Ovary (tissue), 10 donors: ENCODE measurements at regions of chr14 and their contacts with region 1.

Region 1: DNA sequence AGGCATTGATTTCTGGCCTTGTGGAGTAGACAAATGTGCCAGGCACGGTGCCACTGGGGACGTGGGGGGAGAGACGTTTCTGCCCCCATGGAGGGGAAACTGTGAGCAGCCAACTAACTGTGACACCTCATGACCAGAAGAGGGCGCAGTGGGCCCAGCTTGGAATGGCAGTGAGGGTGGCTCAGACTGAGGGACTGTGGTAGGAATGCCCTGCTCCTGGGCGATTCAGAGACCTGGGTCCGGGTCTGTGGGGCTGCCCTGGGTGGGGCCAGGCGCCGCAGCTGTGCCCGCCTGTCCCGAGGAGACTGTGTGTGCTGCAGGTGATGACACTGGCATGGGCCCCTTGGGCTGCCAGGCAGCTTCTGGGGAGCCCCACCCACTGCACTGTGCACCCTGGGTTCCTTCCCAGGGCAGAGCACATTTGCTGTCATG is 60.6 kb downstream of the SLC25A47 start:
- DNase-seq: peak; percentile 36 to 68 (median 67)
- H3K4me3 ChIP-seq: no peak overlapping the region
- H3K27ac ChIP-seq: no peak overlapping the region
- H3K4me1 ChIP-seq: peaks cover 2% of the 10 kb centered on the region
- H3K27me3 ChIP-seq: no peaks in the 10 kb centered on the region
- CTCF ChIP-seq: peak; percentile 54 to 61 (median 58)
- EP300 ChIP-seq: no peak
- POLR2A ChIP-seq: no peak

Region 2: DNA sequence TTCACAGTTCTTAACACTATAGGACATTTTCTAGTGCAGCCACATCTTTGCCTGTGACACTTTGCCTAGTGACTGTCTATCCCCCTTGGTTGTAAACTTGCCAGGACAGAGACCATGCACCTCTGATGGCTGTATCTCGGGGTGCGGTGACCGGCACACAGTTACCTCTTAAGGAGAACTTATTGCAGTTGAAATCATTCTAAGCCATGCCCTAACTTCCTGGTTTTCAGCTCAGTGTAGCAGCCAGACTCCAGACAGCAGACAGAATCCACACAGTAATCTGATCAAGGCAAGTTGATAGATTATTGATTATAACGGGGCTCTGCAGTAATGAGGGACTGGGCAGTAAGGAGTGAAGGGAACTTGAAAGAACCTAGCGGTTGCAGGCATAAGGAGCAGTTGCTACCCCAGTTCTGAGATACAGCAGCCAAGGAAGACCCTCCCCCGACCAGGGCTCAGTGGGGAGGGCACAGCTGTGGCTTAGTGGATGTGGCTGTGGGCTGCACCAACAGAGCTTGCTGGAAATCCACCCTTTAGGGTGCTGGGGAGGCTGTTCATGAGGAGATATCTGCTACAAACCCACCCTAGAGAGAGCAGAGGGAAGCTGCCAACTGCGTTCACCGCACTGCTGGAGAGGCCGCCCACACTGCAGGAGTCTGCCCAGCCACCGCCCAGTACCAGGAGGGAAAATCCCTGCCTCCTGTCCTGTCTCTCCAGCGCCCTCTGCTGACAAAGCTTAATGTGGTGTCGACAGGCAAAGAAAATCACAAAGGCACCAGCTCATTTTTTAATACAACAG is 261.6 kb after region 1 on chr14:
- intact Hi-C with region 1: loop called in 3 of 4 experiments (anchors 5 kb)
- DNase-seq: peak; percentile 74 to 86 (median 82)
- H3K4me3 ChIP-seq: no peak overlapping the region
- H3K27ac ChIP-seq: no peak overlapping the region
- H3K4me1 ChIP-seq: no peaks in the 10 kb centered on the region
- H3K27me3 ChIP-seq: no peaks in the 10 kb centered on the region
- CTCF ChIP-seq: peak; percentile 15 to 68 (median 65)
- EP300 ChIP-seq: no peak
- POLR2A ChIP-seq: no peak

Region 3: GRCh38 chr14:100654814-100655740 is 271.3 kb after region 1 on chr14:
- intact Hi-C with region 1: loop called in 1 of 4 experiments (anchors 5 kb)
- DNase-seq: peak in 2 of 5 donors; percentile 28 to 63
- H3K4me3 ChIP-seq: no peak overlapping the region
- H3K27ac ChIP-seq: no peak overlapping the region
- H3K4me1 ChIP-seq: no peaks in the 10 kb centered on the region
- H3K27me3 ChIP-seq: no peaks in the 10 kb centered on the region
- CTCF ChIP-seq: peak in 2 of 3 donors; percentile 21 to 38
- EP300 ChIP-seq: no peak
- POLR2A ChIP-seq: no peak

Region 4: DNA sequence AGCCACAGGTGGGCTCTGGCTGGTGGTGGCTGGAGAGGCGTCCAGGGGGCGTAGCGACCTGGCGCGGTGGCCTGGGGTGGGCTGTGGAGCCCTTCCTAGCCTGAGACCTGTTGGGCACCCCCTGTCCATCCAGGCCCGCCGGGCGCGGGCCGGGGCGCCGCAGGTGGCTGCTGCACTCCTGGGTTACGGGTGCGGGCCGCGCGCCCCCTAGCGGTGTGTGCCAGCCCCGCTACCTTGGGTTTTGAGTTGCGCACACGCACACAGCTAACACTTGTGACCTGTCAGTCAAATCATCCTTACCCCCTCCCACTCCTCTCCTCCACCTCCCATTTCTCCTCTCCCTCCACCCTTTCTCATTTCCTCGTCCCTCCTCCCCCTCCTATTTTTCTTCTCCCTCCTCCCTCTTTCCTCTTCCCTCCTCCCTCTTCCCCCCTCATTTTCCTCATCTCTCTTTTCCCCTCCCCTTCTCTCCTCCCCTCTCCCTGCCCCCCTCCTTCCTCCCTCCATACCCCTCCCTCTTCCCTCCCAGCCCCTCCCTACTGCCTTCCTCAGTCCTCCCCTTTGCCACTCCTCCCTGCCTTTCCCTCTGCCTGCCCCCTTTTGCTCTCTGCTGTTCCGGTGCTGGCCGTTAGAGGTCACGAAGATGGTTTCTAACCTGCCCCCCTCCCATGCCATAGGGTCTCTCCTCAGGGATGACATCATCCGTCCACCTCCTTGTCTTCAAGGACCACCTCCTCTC is 444.5 kb after region 1 on chr14:
- intact Hi-C with region 1: loop called in 1 of 4 experiments (anchors 10 kb)
- DNase-seq: peak; percentile 48 to 80 (median 59)
- H3K4me3 ChIP-seq: peak overlapping the region; percentile 49
- H3K27ac ChIP-seq: peak overlapping the region in 1 of 2 donors; percentile 72
- H3K4me1 ChIP-seq: peaks cover 2% of the 10 kb centered on the region
- H3K27me3 ChIP-seq: no peaks in the 10 kb centered on the region
- CTCF ChIP-seq: peak; percentile 20 to 63 (median 50)
- EP300 ChIP-seq: no peak
- POLR2A ChIP-seq: no peak

Region 5: DNA sequence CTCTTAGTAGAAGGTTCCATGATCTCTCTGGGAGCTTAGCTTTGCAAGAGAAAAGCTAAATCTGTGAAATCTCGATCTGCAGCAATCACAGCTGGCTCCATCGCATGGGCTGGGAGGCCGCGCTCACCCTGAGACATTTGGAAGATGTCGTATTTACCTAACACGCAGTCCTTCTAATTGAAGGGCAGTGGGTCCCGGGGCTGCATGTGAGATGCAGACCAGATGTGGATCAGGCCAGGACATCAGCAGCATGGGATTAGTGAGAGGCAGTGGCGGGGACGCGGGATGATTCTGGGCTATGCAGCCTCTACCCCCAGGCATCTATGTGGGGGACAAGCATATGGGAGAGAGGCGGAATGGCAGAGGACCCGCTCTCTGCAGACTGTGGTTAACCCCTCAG is 832.2 kb after region 1 on chr14:
- intact Hi-C with region 1: no loop called
- DNase-seq: peak in 3 of 5 donors; percentile 5 to 23 (median 9)
- H3K4me3 ChIP-seq: no peak overlapping the region
- H3K27ac ChIP-seq: no peak overlapping the region
- H3K4me1 ChIP-seq: peaks cover 4% of the 10 kb centered on the region
- H3K27me3 ChIP-seq: no peaks in the 10 kb centered on the region
- CTCF ChIP-seq: no peak
- EP300 ChIP-seq: no peak
- POLR2A ChIP-seq: no peak

Region 6: DNA sequence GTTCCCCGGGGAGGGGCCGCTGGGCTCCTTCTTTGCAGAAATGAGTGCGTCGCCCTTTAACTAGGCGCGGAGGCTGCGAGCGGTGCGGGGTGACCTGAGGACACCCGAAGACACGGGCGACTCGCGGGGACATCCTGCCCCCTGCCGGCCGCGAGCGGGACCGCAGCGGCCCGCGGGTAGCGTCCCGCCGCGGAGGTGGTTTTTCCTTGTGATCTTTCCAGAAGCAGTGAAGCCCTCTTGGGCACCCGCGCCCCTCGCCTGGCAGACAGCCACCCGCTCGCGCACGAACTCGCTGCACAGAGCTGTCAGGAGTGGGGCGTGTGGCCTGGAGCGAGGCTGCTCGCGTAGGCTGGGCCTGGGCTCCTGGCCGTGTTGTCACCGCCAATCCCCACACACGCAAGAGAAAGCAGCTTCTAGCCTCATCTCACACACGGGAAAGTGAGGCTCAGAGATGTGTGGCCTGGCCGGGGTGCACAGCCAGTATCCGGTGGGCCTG is 1244.8 kb after region 1 on chr14:
- intact Hi-C with region 1: loop called in 3 of 4 experiments (anchors 2 to 10 kb)
- DNase-seq: peak; percentile 73 to 90 (median 81)
- H3K4me3 ChIP-seq: no peak overlapping the region
- H3K27ac ChIP-seq: peak overlapping the region in 1 of 2 donors; percentile 33
- H3K4me1 ChIP-seq: peaks cover 2% of the 10 kb centered on the region
- H3K27me3 ChIP-seq: no peaks in the 10 kb centered on the region
- CTCF ChIP-seq: peak; percentile 97 to 99 (median 97)
- EP300 ChIP-seq: no peak
- POLR2A ChIP-seq: peak; percentile 12